ENCODE measurements at regions of chr5 and their contacts with region 1.

Region 1: DNA sequence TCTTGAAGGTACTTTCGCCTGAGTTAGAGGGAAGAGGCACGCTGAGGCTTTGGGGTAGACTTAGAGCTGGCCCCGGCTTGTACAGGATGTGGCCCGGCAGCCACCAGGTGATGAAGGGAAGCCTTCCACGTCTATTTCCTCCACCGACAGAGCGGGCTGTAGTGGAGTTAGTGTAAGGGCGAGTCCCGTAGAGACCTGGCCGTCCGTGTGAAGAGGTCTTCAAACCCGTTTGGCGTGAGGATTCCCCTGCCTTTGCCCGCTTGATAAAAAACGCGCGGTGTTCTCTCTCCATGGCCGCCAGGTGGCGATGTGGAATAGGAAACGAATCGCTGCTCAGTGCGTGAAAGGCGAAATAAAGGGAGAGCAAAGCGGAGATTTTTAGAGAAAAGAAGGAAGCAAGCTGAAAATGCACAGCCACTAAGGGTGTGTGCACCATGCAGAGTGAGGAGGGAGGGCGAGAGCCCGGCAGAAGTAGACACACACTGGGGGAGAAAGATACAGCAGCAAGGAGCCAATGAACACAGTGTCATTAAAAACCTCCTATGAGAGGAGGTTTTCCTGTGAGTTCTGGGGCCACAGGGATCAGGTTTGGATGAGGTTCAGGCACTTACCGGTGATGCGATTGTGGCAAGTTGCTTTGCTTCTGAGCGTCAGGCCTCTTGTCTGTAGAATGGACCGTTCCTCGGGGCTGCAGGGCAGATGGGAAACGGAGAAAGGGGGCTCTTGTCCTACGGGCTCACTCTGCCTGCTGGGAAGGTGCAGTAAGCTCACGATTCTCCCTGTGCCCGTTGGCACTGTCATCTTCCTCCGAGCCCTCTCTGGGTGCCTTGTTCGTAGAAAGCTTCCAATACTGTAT is 34.2 kb downstream of the STC2 start:
- DNase-seq: peak; percentile 68 to 94
- H3K4me3 ChIP-seq: no peak overlapping the region
- CTCF ChIP-seq: peak in 1 of 3 donors; percentile 79
- POLR2A ChIP-seq: no peak

Region 2: DNA sequence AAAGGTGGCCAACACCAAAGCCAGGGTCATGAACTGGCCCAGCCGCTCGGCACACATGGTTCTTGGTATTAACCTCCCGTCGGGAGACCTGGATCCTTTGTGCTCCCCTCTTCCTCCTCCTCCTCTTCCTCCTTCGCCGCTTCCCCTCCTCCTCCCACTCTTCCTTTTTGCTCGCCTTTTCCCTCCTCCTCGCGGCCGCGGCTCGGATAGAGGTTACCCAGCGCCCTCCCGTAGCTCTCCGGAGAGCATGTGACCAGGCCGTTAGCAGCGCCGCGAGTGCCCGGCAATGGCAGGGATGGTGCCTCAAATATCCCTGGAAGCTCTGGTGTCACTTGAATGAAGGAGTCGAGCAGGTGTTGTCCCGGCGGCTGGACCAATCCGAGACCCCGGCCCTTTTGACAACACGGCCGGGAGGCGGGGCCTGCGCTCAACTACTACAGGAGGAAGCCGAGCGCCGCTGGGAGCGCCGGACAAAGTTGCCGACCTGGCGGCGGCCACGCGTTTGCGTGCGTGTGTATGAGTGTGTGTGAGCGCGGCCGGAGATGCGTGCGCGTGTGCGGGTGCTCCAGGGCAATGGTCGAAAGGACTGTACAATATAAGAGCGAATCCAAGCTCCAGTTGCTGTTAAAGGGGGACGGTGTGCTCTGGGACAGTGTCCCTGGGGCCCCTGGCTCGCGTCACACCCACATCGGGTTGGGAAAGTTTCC is 34.2 kb after region 1 on chr5 and contains the start of gene STC2:
- intact Hi-C with region 1: loop called (anchors 5 kb)
- DNase-seq: peak; percentile 31 to 90
- H3K4me3 ChIP-seq: peak within 1 kb of the TSS; percentile 18
- CTCF ChIP-seq: no peak
- POLR2A ChIP-seq: no peak
- total RNA-seq, gene STC2: 3.2 to 29.1 (median 9.9) TPM

Region 3: GRCh38 chr5:173498286-173498685 is 204.2 kb after region 1 on chr5:
- intact Hi-C with region 1: no loop called
- DNase-seq: peak; percentile 48 to 89
- H3K4me3 ChIP-seq: no peak overlapping the region
- CTCF ChIP-seq: no peak
- POLR2A ChIP-seq: no peak

Region 4: DNA sequence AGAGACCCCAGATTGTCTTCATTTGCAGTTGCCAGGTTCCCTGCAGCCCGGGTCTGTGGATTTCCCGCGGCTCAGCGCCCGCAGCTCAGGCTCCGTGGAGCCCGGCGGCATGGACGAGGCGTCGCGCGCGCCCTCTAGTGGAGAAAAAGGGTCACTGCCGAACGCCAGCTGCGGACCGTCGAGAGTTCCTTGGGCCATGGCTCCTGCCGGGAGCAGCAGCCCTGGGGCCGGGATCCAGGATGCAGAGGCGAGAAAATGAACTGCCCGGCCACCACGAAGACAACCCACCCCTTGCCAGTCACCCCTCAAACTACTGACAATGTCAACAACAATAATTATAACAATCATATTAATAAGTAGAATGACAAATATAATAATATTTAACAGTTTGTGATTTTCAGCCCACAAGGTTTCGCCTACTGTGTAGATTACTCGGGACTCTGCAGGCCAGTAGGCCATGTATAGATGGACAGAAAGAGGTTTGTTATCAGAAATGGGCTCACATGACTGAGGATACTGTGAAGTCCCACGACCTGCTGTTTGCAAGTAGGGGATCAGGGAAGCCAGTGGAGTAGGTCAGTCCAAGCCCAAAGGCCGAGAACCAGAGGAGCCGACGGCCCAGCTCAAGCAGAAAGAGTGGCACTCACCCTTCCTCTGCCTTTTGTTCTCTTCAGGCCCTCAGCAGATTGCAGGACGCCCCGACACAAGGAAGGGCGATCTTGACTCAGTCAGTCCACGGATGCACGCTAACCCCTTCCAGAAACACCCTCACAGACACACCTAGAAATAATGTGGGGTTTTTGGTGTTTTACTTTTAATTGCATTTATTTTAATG is 279.3 kb after region 1 on chr5:
- intact Hi-C with region 1: loop called (anchors 10 kb)
- DNase-seq: peak; percentile 60 to 95
- H3K4me3 ChIP-seq: no peak overlapping the region
- CTCF ChIP-seq: peak in 1 of 3 donors; percentile 74
- POLR2A ChIP-seq: no peak